Activated T-helper 2 cell treated with anti-CD3 and anti-CD28 coated beads, Interferon-gamma antibody, Interleukin-2, Interleukin-4, amounts not matched to agents 10 μg/mL and 5 μg/mL and 100 μg/mL, durations not matched to agents 14 hours and 24 hours and 36 hours (primary cell): ENCODE measurements at regions of chr6 and their contacts with region 1.

Region 1: DNA sequence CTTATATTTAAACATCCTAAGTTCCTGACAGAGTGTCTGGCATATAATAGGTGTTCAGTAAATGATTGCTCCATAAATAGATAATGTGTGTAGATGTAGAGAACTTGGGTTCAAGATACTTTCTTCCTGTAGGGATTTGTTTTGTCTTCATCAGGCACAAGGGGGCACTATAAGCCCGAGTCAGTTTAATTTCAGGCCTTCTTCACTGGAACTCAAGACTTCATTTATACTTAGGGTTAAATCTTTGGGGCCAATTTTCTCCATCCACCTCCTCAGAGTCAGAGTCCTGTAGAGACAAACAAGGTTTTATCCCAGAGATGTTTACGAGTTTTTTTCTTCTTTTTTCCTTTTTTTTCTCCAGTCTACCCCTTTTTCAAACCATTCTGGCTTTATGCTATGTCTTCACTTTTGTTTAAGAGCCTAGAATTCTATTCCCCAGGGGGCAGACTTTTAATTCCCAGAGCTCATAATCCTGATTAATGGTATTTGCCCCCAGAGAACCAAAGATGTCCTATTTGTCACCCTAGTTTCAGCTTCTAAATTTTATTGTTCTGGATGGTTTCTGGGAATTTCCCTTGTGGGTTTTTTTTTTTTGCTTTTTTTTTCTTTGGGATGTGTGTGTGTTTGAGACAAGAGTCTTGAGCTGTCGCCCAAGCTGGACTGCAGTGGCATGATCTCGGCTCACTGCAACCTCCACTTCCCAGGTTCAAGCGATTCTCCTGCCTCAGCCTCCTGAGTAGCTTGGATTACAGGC is 88.4 kb downstream of the HFE start:
- DNase-seq: peak; percentile 52
- H3K4me3 Mint-ChIP-seq: peak overlapping the region; percentile 56
- H3K27ac Mint-ChIP-seq: peak overlapping the region; percentile 63
- H3K4me1 Mint-ChIP-seq: peaks cover 45% of the 10 kb centered on the region
- H3K27me3 Mint-ChIP-seq: no peaks in the 10 kb centered on the region

Region 2: GRCh38 chr6:26152221-26153101 is 23.1 kb before region 1 on chr6:
- intact Hi-C with region 1: no loop called
- DNase-seq: no peak
- H3K4me3 Mint-ChIP-seq: no peak overlapping the region
- H3K27ac Mint-ChIP-seq: no peak overlapping the region
- H3K4me1 Mint-ChIP-seq: peaks cover 23% of the 10 kb centered on the region
- H3K27me3 Mint-ChIP-seq: peaks cover 2% of the 10 kb centered on the region

Region 3: DNA sequence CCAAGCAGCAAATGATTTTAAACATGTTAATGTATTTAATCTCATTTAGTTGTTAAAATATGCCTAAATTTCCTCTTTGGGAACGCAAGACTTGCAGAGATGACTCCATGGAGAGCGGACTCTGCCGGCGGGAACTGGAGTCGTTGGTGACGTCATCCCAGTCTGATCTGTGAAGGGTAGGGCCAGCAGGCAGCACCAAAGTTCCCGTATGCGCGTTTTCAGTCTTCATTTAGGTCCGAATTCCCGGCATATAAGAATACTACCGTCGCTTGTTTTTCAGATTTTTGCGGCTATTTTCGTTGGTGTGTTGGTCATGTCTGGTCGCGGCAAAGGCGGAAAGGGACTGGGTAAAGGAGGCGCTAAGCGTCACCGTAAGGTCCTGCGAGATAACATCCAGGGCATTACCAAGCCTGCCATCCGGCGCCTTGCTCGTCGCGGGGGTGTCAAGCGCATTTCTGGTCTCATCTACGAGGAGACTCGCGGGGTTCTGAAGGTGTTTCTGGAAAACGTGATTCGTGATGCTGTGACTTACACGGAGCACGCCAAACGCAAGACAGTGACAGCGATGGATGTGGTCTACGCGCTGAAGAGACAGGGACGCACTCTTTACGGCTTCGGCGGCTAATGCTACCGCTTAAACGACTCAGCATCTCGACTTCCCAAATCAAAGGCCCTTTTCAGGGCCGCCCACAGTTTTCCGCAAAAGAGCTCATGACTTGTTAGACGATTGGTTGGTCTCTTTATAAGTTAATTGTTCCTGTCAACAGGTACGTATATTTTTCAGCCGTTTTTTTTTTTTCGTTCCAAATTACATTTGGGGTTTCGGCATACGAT is 28.9 kb after region 1 on chr6:
- intact Hi-C with region 1: no loop called
- DNase-seq: peak; percentile 86
- H3K4me3 Mint-ChIP-seq: no peak overlapping the region
- H3K27ac Mint-ChIP-seq: no peak overlapping the region
- H3K4me1 Mint-ChIP-seq: peaks cover 36% of the 10 kb centered on the region
- H3K27me3 Mint-ChIP-seq: no peaks in the 10 kb centered on the region

Region 4: DNA sequence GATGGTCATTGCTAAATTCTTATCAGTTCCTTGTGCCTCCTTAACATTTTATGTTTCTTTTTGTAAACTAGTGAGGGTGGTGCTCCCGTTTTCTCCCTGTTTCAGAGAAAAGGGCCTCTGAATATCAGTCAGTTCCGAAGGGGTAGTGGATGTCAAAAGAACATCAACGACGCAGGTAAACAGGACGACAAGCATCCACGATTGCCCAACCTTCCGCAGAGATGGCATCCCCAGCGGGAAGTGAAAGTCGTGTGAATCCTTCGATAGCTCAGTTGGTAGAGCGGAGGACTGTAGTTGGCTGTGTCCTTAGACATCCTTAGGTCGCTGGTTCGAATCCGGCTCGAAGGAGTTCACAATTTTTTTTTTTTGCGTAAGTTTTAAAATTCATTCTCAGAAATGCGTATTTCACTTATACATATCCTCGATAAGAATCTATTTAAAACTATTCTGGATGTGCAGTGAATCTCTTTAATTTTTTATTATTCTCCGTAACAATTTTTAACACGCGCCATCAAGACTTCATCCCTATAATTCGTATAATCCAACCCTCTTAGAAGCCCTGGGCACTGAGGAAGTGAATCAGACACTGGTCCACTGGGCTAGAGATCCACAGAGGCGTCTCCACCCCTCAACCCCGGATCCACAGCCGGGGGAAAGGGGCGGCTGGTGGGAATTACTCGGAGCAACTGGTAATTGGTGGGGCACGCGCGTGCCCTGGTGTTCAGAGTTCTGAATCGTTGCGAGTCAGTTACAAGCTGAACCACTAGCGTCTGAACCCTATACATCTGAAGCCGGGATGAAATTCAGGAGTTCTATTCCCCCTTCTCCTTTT is 393.2 kb after region 1 on chr6:
- intact Hi-C with region 1: loop called (anchors 1 kb)
- DNase-seq: peak; percentile 95
- H3K4me3 Mint-ChIP-seq: peak overlapping the region; percentile 93
- H3K27ac Mint-ChIP-seq: peak overlapping the region; percentile 78
- H3K4me1 Mint-ChIP-seq: peaks cover 32% of the 10 kb centered on the region
- H3K27me3 Mint-ChIP-seq: no peaks in the 10 kb centered on the region